ENCODE measurements at regions of chr3 and their contacts with region 1.

Region 1: DNA sequence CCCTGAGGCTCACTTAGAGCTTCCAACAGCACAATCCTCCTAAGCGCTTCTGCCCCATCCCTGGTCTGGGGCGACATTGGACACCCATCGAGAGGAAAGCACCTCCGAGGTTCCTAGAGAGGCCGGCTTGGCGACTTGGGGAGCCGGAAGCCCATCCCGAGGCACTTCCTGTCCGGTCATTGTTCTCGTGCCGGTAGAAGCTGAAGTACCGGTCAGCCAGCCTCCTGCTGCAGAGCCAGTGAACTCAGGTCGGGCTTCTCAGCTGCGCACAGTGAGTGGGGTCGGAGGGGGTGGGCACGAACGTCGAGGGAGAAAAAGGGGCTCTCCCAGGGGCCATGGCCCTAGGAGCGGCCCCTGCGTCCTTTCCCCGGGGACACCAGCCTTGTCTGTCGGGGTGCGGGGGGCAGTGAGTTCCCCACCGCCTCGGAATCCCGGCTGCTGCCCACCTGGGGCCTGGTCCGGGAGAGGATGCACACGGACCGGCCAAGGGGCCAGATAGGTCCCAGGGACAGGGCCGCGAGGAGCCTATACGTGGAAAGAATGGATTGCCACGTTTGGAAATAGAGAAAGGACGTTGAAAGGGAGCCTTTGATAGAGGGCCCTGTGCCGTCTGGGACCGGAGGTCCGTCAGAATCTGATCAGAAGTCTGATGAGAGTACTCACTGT is at the start of gene ZNF35:
- DNase-seq: peak; percentile 41
- ATAC-seq: peak; percentile 98
- H3K4me3 ChIP-seq: peak within 1 kb of the TSS; percentile 92
- H3K27ac ChIP-seq: peak within 1 kb of the TSS; percentile 64
- H3K4me1 ChIP-seq: no peaks in the 10 kb centered on the region
- H3K27me3 ChIP-seq: no peaks in the 10 kb centered on the region
- CTCF ChIP-seq: no peak
- EP300 ChIP-seq: no peak
- POLR2A ChIP-seq: peak; percentile 89
- RAD21 ChIP-seq: no peak
- polyA plus RNA-seq, gene ZNF35: 14.3 to 14.7 TPM

Region 2: GRCh38 chr3:44584646-44585501 is 63.8 kb before region 1 on chr3 and contains the start of gene ZNF660:
- CTCF ChIA-PET with region 1: no interaction called
- POLR2A ChIA-PET with region 1: no interaction called
- RAD21 ChIA-PET with region 1: no interaction called
- SMC1A ChIA-PET with region 1: no interaction called
- in situ Hi-C with region 1: no loop called
- intact Hi-C with region 1: no loop called
- DNase-seq: no peak
- ATAC-seq: peak; percentile 94
- H3K4me3 ChIP-seq: peak within 1 kb of the TSS; percentile 12; the same call in 1 of the 2 replicates
- H3K27ac ChIP-seq: no peak within 1 kb of the TSS
- H3K4me1 ChIP-seq: no peaks in the 10 kb centered on the region
- H3K27me3 ChIP-seq: peaks cover 0 to 2% of the 10 kb centered on the region in 2 experiments; a peak in 1 of 4 replicates
- CTCF ChIP-seq: no peak
- EP300 ChIP-seq: 0 out of 4 replicates have a peak, but pooled peaks of 1 of the 2 experiments have one; percentile 12
- POLR2A ChIP-seq: peak; percentile 70
- RAD21 ChIP-seq: no peak
- polyA plus RNA-seq, gene ZNF660: 0.62 to 2.0 TPM

Region 3: GRCh38 chr3:44624749-44625480 is 23.8 kb before region 1 on chr3 and contains the start of gene ZNF197:
- CTCF ChIA-PET with region 1: interaction called, 16 read pairs
- POLR2A ChIA-PET with region 1: interaction called, 5 read pairs
- RAD21 ChIA-PET with region 1: interaction called, 3 read pairs
- SMC1A ChIA-PET with region 1: interaction called, 16 read pairs
- in situ Hi-C with region 1: no loop called
- intact Hi-C with region 1: loop called (anchors 1 kb)
- DNase-seq: peak; percentile 48
- ATAC-seq: peak; percentile 97
- H3K4me3 ChIP-seq: peak within 1 kb of the TSS; percentile 75
- H3K27ac ChIP-seq: peak within 1 kb of the TSS; percentile 76
- H3K4me1 ChIP-seq: no peaks in the 10 kb centered on the region
- H3K27me3 ChIP-seq: no peaks in the 10 kb centered on the region
- CTCF ChIP-seq: peak in 2 of 3 experiments; percentile 2 to 10; a peak in 1 of 6 replicates
- EP300 ChIP-seq: no peak
- POLR2A ChIP-seq: peak; percentile 88
- RAD21 ChIP-seq: no peak
- polyA plus RNA-seq, gene ZNF197: 3.2 to 4.4 TPM

Region 4: DNA sequence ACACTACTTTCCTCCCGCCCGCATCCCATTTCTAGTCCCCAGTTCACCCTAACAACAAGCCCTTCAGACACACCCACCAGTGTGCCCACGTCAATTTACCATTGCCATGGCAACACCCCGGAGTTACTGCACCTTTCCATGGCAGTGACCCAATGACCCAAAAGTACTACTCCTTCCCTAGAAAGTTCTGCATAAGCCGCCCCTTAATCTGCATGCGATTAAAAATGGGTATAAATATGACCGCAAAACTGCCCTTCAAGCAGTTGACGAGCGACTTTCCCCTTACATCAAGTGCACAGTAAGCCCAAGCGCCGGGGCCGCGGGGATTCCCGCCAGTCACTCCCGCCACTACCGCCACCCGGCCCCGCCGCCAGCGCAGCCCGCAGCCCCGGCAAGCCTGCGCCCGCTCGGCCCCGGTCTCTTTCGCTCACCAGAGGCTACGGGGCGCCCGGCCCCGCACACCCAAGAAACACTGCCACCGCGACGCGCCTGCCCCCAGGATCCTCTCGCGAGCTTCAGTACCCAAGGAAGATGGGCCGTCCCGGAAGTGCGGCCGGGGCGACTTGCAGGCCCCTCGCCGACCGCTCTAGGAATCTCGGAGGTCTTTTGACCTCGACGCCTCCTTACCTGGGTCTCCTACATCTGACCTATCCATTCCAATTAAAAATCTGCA is 36.6 kb after region 1 on chr3:
- CTCF ChIA-PET with region 1: interaction called, 3 read pairs
- POLR2A ChIA-PET with region 1: no interaction called
- RAD21 ChIA-PET with region 1: no interaction called
- SMC1A ChIA-PET with region 1: no interaction called
- in situ Hi-C with region 1: no loop called
- intact Hi-C with region 1: loop called (anchors 1 kb)
- DNase-seq: peak; percentile 27
- ATAC-seq: peak; percentile 99
- H3K4me3 ChIP-seq: peak overlapping the region; percentile 60; the same call in 1 of the 2 replicates
- H3K27ac ChIP-seq: no peak overlapping the region
- H3K4me1 ChIP-seq: no peaks in the 10 kb centered on the region
- H3K27me3 ChIP-seq: no peaks in the 10 kb centered on the region
- CTCF ChIP-seq: no peak
- EP300 ChIP-seq: no peak
- POLR2A ChIP-seq: peak; percentile 80
- RAD21 ChIP-seq: no peak

Region 5: GRCh38 chr3:44761424-44762169 is 112.9 kb after region 1 on chr3 and contains the starts of genes KIAA1143 and KIF15:
- CTCF ChIA-PET with region 1: no interaction called
- POLR2A ChIA-PET with region 1: no interaction called
- RAD21 ChIA-PET with region 1: no interaction called
- SMC1A ChIA-PET with region 1: no interaction called
- in situ Hi-C with region 1: no loop called
- intact Hi-C with region 1: loop called (anchors 10 kb)
- DNase-seq: peak; percentile 77
- ATAC-seq: peak; percentile 95
- H3K4me3 ChIP-seq: peak within 1 kb of the TSS; percentile 79
- H3K27ac ChIP-seq: peak within 1 kb of the TSS; percentile 93
- H3K4me1 ChIP-seq: 0 out of 2 replicates have a peak, but pooled peaks cover 4% of the 10 kb centered on the region
- H3K27me3 ChIP-seq: no peaks in the 10 kb centered on the region
- CTCF ChIP-seq: peak in 1 of 3 experiments; percentile 12; a peak in 1 of 6 replicates
- EP300 ChIP-seq: peak in 1 of 2 experiments; percentile 44; a peak in 1 of 4 replicates
- POLR2A ChIP-seq: peak; percentile 95
- RAD21 ChIP-seq: no peak
- polyA plus RNA-seq, gene KIAA1143: 22.5 to 27.1 TPM
- polyA plus RNA-seq, gene KIF15: 12.3 to 16.3 TPM

Measured in GM12878 (cell line).